Vagina (tissue), 2 donors: ENCODE measurements at regions of chr5 and their contacts with region 1.

Region 1: GRCh38 chr5:170225326-170226128 is 7.3 kb upstream of the C5orf58 start:
- DNase-seq: no peak
- H3K4me3 ChIP-seq: no peak overlapping the region
- H3K27ac ChIP-seq: no peak overlapping the region
- H3K4me1 ChIP-seq: no peaks in the 10 kb centered on the region
- H3K27me3 ChIP-seq: no peaks in the 10 kb centered on the region
- CTCF ChIP-seq: peak; percentile 54 to 75 (median 63)
- POLR2A ChIP-seq: no peak

Region 2: GRCh38 chr5:170267431-170268152 is 42.1 kb after region 1 on chr5:
- intact Hi-C with region 1: loop called (anchors 5 kb)
- DNase-seq: peak in 1 of 2 donors; percentile 60
- H3K4me3 ChIP-seq: no peak overlapping the region
- H3K27ac ChIP-seq: peak overlapping the region; percentile 58
- H3K4me1 ChIP-seq: peaks cover 25% of the 10 kb centered on the region
- H3K27me3 ChIP-seq: no peaks in the 10 kb centered on the region
- CTCF ChIP-seq: peak; percentile 25 to 82 (median 77)
- POLR2A ChIP-seq: no peak

Region 3: GRCh38 chr5:170342153-170342725 is 116.7 kb after region 1 on chr5:
- intact Hi-C with region 1: loop called (anchors 5 kb)
- DNase-seq: no peak
- H3K4me3 ChIP-seq: no peak overlapping the region
- H3K27ac ChIP-seq: no peak overlapping the region
- H3K4me1 ChIP-seq: no peaks in the 10 kb centered on the region
- H3K27me3 ChIP-seq: no peaks in the 10 kb centered on the region
- CTCF ChIP-seq: no peak
- POLR2A ChIP-seq: no peak

Region 4: DNA sequence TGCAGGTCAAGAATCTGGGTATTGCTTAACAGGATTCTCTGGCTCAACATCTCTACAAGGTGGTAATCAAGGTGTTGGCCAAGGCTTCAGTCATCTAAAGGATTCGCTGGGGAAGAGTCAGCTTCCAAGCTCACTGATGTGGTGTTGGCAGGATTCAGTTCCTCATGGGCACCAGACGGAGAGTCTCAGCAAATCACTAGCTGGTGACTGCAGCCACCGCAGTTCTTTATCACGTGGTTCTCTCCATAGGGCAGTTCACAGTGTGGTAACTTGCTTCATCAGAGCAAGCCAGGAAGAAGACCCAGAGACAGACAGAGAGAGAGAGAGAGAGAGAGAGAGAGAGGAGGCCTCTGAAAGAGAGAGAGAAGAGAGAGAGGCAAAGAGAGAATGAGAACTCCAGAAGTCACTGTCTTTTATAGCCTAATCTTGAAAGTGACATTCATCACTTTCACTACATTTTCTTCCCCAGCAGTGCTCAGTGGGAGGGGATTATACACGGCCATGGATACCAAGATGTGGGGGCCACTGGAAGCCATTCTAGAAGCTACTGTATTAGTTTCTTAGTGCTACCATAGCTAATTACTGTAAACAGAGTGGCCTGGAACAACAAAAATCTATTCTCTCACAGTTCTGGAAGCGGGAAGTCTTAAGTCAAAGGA is 1450.9 kb after region 1 on chr5:
- intact Hi-C with region 1: no loop called
- DNase-seq: peak in 1 of 2 donors; percentile 67
- H3K4me3 ChIP-seq: no peak overlapping the region
- H3K27ac ChIP-seq: no peak overlapping the region
- H3K4me1 ChIP-seq: no peaks in the 10 kb centered on the region
- H3K27me3 ChIP-seq: no peaks in the 10 kb centered on the region
- CTCF ChIP-seq: no peak
- POLR2A ChIP-seq: no peak